ENCODE measurements at regions of chr4 and their contacts with region 1.

Region 1: DNA sequence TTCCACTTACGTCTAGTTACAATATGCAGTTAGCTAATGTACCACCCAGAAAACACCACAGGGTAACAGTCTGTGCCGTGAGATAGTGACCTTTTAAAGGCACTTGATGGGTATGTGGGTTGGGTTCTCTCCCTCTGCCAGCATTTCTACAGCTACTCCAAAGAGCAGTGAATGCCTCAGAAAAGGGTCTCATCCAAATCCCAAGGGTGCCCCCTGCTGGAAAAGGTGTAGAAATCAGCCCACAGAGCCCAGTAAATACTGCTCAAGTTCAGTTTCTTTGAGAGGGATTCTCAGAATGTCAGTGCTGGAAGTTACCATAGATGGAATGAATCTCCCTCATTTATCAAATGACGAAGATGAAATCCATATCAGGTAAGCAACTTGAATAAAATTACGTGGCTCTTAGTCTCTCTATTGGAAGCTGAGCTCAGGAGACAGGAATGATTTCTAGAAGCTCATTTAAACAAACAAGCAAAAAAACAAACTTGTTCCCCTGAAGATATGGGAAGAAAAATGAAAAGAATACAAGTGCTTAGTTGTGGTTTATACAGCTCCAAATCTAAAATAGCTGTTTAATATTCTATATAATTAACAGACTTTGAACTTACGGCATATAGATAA is 9.5 kb downstream of the RNF175 start:
- ATAC-seq: peak; percentile 69 to 98 (median 88)
- H3K4me3 ChIP-seq: no peak overlapping the region
- H3K27ac ChIP-seq: no peak overlapping the region
- H3K4me1 ChIP-seq: no peaks in the 10 kb centered on the region

Region 2: GRCh38 chr4:153634738-153635353 is 115.5 kb before region 1 on chr4:
- in situ Hi-C with region 1: loop called in 2 of 9 experiments (anchors 10 kb)
- ATAC-seq: peak in 4 of 8 experiments; percentile 18 to 69 (median 56)
- H3K4me3 ChIP-seq: no peak overlapping the region
- H3K27ac ChIP-seq: no peak overlapping the region
- H3K4me1 ChIP-seq: peaks cover 0 to 6% of the 10 kb centered on the region in 2 donors

Measured in motor neuron (in vitro differentiated cells).